GM12878 (cell line): ENCODE measurements at regions of chr7 and their contacts with region 1.

Region 1: GRCh38 chr7:108541478-108541877 is 15.5 kb upstream of the PNPLA8 start:
- DNase-seq: no peak
- ATAC-seq: no peak
- H3K4me3 ChIP-seq: no peak overlapping the region
- H3K27ac ChIP-seq: no peak overlapping the region
- H3K4me1 ChIP-seq: no peaks in the 10 kb centered on the region
- H3K27me3 ChIP-seq: no peaks in the 10 kb centered on the region
- CTCF ChIP-seq: no peak
- EP300 ChIP-seq: no peak
- POLR2A ChIP-seq: no peak
- RAD21 ChIP-seq: no peak

Region 2: GRCh38 chr7:108358358-108358952 is 183.0 kb before region 1 on chr7:
- CTCF ChIA-PET with region 1: no interaction called
- POLR2A ChIA-PET with region 1: no interaction called
- RAD21 ChIA-PET with region 1: no interaction called
- SMC1A ChIA-PET with region 1: no interaction called
- in situ Hi-C with region 1: no loop called
- intact Hi-C with region 1: no loop called
- DNase-seq: no peak
- ATAC-seq: no peak
- H3K4me3 ChIP-seq: no peak overlapping the region
- H3K27ac ChIP-seq: no peak overlapping the region
- H3K4me1 ChIP-seq: no peaks in the 10 kb centered on the region
- H3K27me3 ChIP-seq: no peaks in the 10 kb centered on the region; a peak in 1 of 4 replicates
- CTCF ChIP-seq: no peak
- EP300 ChIP-seq: no peak
- POLR2A ChIP-seq: no peak
- RAD21 ChIP-seq: no peak

Region 3: GRCh38 chr7:108561047-108561619 is 19.7 kb after region 1 on chr7:
- CTCF ChIA-PET with region 1: no interaction called
- POLR2A ChIA-PET with region 1: interaction called, 5 read pairs
- RAD21 ChIA-PET with region 1: no interaction called
- SMC1A ChIA-PET with region 1: interaction called, 10 read pairs
- in situ Hi-C with region 1: no loop called
- intact Hi-C with region 1: no loop called
- DNase-seq: no peak
- ATAC-seq: no peak
- H3K4me3 ChIP-seq: no peak overlapping the region
- H3K27ac ChIP-seq: no peak overlapping the region
- H3K4me1 ChIP-seq: no peaks in the 10 kb centered on the region
- H3K27me3 ChIP-seq: no peaks in the 10 kb centered on the region
- CTCF ChIP-seq: no peak
- EP300 ChIP-seq: no peak
- POLR2A ChIP-seq: no peak
- RAD21 ChIP-seq: no peak

Region 4: GRCh38 chr7:108947526-108947925 is 406.0 kb after region 1 on chr7:
- CTCF ChIA-PET with region 1: no interaction called
- POLR2A ChIA-PET with region 1: no interaction called
- RAD21 ChIA-PET with region 1: no interaction called
- SMC1A ChIA-PET with region 1: no interaction called
- in situ Hi-C with region 1: no loop called
- intact Hi-C with region 1: no loop called
- DNase-seq: no peak
- ATAC-seq: no peak
- H3K4me3 ChIP-seq: no peak overlapping the region
- H3K27ac ChIP-seq: no peak overlapping the region
- H3K4me1 ChIP-seq: no peaks in the 10 kb centered on the region
- H3K27me3 ChIP-seq: no peaks in the 10 kb centered on the region
- CTCF ChIP-seq: no peak
- EP300 ChIP-seq: no peak
- POLR2A ChIP-seq: no peak
- RAD21 ChIP-seq: no peak